Right cardiac atrium (tissue), 5 donors: ENCODE measurements at regions of chr11 and their contacts with region 1.

Region 1: GRCh38 chr11:20397281-20397680 is 9.8 kb downstream of the PRMT3 start:
- DNase-seq: no peak
- ATAC-seq: peak in 1 of 2 donors; percentile 42
- H3K4me3 ChIP-seq: no peak overlapping the region
- H3K27ac ChIP-seq: no peak overlapping the region
- H3K4me1 ChIP-seq: no peaks in the 10 kb centered on the region
- H3K27me3 ChIP-seq: no peaks in the 10 kb centered on the region

Region 2: GRCh38 chr11:20451568-20451967 is 54.3 kb after region 1 on chr11:
- intact Hi-C with region 1: loop called in 1 of 4 experiments (anchors 10 kb)
- DNase-seq: no peak
- ATAC-seq: no peak
- H3K4me3 ChIP-seq: no peak overlapping the region
- H3K27ac ChIP-seq: no peak overlapping the region
- H3K4me1 ChIP-seq: no peaks in the 10 kb centered on the region
- H3K27me3 ChIP-seq: no peaks in the 10 kb centered on the region

Region 3: GRCh38 chr11:20609727-20610707 is 212.7 kb after region 1 on chr11:
- intact Hi-C with region 1: loop called in 1 of 4 experiments (anchors 5 kb)
- DNase-seq: peak; percentile 73 to 90 (median 87)
- ATAC-seq: peak; percentile 88 to 95
- H3K4me3 ChIP-seq: no peak overlapping the region
- H3K27ac ChIP-seq: no peak overlapping the region
- H3K4me1 ChIP-seq: no peaks in the 10 kb centered on the region
- H3K27me3 ChIP-seq: peaks cover 3% of the 10 kb centered on the region